ENCODE measurements at regions of chr1 and their contacts with region 1.

Region 1: DNA sequence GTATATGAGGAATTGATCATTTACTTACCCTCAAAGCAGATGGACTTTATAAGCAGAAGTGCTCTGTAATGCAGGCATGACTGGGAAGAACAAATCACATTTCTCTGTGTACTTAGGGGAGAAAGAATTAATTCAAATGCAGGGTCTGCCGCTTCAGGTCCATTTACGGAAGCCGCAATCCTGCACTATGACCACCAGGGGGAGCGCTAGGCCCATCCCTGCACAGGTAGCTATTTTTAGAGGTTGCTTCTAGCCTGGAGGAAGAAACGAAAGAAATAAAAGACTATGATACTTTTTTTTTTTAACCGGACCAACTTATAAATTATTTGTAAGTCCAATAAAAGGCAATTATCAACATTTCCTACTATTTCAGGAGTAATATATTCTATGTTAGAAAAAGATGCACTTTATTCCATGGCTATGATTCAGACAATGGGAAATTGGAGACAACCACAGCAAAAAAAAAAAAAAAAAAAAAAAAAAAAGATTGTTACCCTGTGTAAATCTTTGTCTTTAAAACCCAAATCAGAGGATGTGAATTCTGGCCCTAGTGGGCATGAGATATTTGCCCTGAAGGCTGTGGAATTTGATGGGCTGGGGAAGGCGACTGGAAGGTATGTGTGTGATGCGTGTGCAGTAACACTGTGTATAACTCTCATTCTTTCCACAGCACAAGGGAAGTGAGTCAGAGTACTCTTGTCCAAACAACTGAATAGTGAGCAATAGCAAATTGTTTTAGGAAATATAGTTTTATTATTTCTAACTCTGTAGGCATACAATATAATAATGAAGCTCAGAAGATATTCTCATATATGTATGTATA is 12.9 kb upstream of the FYB2 start:
- DNase-seq: peak; percentile 74
- ATAC-seq: no peak
- H3K4me3 Mint-ChIP-seq: no peak overlapping the region
- H3K27ac Mint-ChIP-seq: no peak overlapping the region
- H3K4me1 Mint-ChIP-seq: no peaks in the 10 kb centered on the region
- H3K27me3 Mint-ChIP-seq: no peaks in the 10 kb centered on the region

Region 2: GRCh38 chr1:56821140-56821797 is 10.8 kb before region 1 on chr1:
- CTCF ChIA-PET with region 1: interaction called, 10 read pairs
- POLR2A ChIA-PET with region 1: no interaction called
- DNase-seq: peak; percentile 79
- ATAC-seq: peak; percentile 85
- H3K4me3 Mint-ChIP-seq: no peak overlapping the region
- H3K27ac Mint-ChIP-seq: no peak overlapping the region
- H3K4me1 Mint-ChIP-seq: no peaks in the 10 kb centered on the region
- H3K27me3 Mint-ChIP-seq: peaks cover 4% of the 10 kb centered on the region

Measured in activated CD8-positive, alpha-beta T cell treated with anti-CD3 and anti-CD28 coated beads, Interleukin-2, amount 10 ng/mL, durations not matched to agents 7 days and 5 days (primary cell).